ENCODE measurements at regions of chr12 and their contacts with region 1.

Region 1: GRCh38 chr12:31117203-31118011 is 43.7 kb downstream of the DDX11 start:
- DNase-seq: no peak
- ATAC-seq: peak; percentile 60 to 84
- H3K4me3 ChIP-seq: peak overlapping the region; percentile 50 to 79 (median 52)
- H3K27ac ChIP-seq: no peak overlapping the region
- H3K4me1 ChIP-seq: peaks cover 0 to 28% of the 10 kb centered on the region in 2 donors
- H3K27me3 ChIP-seq: peaks cover 20 to 24% (median 20%) of the 10 kb centered on the region in 3 donors
- CTCF ChIP-seq: peak in 4 of 5 experiments; percentile 12 to 65 (median 44)
- POLR2A ChIP-seq: no peak

Region 2: DNA sequence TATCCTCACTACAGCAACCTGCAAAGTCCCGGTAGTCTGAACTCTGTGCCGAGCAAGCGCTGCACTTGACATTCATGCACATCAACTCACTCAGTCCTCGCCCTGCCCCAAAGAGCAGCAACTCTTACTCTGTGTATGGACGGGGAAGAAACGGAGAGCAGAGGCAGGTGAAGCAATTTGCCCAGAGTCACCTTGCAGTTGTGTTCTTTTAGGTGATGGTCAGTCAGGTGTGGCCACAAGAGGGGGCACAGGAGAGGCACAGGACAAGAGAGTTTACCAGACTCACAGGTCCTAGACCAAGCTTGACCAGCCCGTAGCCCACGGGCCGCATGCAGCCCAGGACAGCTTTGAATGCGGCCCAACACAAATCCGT is 151.8 kb before region 1 on chr12:
- in situ Hi-C with region 1: no loop called
- intact Hi-C with region 1: no loop called
- DNase-seq: no peak
- ATAC-seq: peak in 1 of 2 donors; percentile 39
- H3K4me3 ChIP-seq: no peak overlapping the region
- H3K27ac ChIP-seq: no peak overlapping the region
- H3K4me1 ChIP-seq: peaks cover 1 to 10% of the 10 kb centered on the region in 2 donors
- H3K27me3 ChIP-seq: no peaks in the 10 kb centered on the region
- CTCF ChIP-seq: no peak
- POLR2A ChIP-seq: no peak

Region 3: GRCh38 chr12:31274520-31275300 is 157.3 kb after region 1 on chr12:
- in situ Hi-C with region 1: no loop called
- intact Hi-C with region 1: loop called (anchors 5 kb)
- DNase-seq: no peak
- ATAC-seq: no peak
- H3K4me3 ChIP-seq: no peak overlapping the region
- H3K27ac ChIP-seq: no peak overlapping the region
- H3K4me1 ChIP-seq: no peaks in the 10 kb centered on the region
- H3K27me3 ChIP-seq: no peaks in the 10 kb centered on the region
- CTCF ChIP-seq: no peak
- POLR2A ChIP-seq: no peak